ENCODE measurements at regions of chrX and their contacts with region 1.

Region 1: GRCh38 chrX:18674788-18675735 is 3.2 kb upstream of the RS1 start:
- DNase-seq: peak; percentile 87
- ATAC-seq: peak; percentile 93

Region 2: DNA sequence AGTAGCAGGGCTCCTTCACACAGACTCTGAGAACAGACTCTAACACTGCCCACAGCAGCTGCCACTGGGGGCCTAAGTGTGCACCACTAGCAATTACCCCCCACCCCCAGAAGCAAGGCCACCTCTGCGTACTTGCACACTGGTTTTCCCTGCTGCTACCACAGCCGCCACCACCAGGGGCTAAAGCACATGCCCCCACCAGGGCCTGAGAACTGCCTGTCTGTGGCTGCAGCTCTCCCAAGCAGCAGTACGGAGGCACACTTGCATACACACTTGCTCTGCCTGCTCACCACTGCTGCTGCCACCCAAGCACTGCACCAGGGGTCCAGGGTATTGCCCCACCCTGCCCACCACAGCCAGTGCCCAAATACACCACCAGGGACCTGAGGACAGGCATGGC is 380.2 kb before region 1 on chrX:
- intact Hi-C with region 1: no loop called
- DNase-seq: no peak
- ATAC-seq: no peak

Region 3: DNA sequence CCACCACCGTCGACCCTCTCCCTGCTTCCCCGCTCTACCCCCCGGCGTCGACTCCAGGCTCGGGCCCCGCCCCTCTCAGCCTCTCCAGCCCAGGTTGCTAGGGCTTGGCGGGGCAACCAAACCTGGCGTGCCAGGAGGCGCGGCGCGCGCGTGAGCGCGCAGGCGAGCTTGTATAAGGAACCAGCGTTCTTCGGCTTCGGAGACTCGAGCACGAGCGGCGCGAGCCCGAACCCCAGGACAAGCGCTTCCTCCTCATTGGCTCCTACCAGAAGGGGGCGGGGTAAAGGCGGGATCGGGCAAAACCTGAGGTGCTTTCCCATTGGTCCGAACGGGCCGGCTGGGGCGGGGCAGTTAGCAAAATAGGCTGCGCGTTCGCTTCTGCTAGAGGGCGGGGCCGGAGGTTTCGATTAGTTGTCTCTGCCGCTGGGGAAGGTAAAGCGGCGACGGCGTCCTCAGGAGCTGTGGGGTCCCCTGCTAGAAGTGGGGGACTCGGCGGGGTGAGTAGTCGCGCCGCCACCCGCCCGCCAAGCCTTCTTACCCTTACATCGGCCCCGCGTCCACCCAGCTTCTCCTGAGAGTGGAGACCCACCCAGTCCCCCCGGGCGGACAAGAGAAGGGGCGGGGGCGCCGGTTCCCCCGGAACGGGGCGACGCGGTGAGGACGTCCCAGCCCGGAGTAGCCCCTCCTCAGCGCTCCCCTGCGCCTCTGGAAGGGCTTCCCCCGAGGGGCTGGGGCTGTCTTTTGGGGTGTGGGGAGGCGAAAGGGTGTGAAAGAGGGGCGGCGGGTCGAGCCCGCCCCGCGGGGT is 249.7 kb before region 1 on chrX and contains the start of gene CDKL5:
- intact Hi-C with region 1: loop called (anchors 5 kb)
- DNase-seq: peak; percentile 97
- ATAC-seq: peak; percentile 98
- total RNA-seq, gene CDKL5: 8.1 TPM

Region 4: DNA sequence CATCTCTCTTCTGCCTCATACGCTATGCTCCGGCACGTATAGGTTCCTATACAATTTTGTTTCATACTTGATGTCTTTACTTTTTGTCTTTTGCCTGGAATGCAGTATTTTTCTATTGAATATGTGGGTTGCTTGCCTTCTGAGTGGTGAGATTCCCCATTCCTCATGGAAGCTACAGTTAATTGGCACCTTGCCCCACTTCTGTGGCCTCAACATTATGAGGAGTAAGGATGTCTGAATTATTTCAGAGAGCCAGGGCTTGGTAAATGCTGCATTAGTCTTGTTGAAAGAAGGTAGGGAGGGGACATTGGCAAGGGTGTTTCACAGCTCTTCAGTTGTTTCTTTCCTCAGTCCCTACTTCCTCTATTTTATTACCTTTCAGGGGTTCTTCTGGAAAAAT is 226.6 kb before region 1 on chrX:
- intact Hi-C with region 1: no loop called
- DNase-seq: no peak
- ATAC-seq: no peak

Region 5: DNA sequence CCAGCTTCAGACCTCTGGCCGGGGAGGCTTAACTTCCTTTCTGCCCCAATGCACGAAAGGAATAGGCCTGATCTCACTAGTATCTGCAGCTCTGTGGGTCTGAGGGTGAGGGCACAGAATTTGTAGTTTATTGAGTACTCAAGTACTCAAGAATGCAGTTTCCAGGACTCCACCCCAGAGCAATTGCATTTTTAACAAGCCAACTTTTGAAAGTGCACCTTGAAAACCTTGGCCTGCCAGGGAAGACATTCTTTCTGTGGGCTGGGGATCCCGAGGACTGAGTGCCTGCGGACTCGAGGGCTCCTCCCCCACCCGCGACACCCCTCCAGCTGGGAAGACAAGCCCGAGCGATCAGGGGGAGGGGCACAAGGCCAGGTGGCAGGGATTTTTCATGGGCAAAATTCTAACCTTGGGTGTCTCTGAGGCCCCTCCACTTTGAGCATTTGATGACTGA is 25.5 kb before region 1 on chrX:
- intact Hi-C with region 1: no loop called
- DNase-seq: no peak
- ATAC-seq: no peak

Region 6: DNA sequence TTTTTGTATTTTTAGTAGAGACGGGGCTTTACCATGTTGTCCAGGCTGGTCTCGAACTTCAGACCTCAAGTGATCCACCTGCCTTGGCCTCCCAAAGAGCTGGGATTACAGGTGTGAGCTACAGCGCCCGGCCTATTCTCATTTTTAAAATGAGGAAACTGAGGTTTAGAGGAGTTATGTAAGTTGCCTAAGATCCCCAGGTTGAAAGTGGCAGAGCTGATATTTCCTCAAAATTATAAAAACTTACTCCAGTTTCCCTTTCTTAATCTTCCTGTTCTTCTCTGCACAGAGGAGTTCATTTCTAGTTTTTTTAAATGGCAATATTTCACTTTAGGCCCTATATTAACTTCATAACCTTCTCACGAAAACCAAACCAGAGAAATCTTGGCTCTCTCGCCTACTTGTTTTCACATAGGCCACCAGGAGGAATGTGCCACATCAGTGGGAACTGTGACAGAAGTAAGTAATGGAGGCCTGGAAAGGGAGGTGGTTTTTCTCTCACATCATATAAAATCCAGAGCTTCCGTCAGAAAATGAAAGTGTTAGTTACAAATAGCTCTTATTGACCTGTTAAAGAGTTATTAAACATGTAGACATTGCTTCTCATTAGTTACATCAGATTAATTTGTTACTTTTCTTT is 12.9 kb after region 1 on chrX:
- intact Hi-C with region 1: no loop called
- DNase-seq: no peak
- ATAC-seq: no peak

Region 7: DNA sequence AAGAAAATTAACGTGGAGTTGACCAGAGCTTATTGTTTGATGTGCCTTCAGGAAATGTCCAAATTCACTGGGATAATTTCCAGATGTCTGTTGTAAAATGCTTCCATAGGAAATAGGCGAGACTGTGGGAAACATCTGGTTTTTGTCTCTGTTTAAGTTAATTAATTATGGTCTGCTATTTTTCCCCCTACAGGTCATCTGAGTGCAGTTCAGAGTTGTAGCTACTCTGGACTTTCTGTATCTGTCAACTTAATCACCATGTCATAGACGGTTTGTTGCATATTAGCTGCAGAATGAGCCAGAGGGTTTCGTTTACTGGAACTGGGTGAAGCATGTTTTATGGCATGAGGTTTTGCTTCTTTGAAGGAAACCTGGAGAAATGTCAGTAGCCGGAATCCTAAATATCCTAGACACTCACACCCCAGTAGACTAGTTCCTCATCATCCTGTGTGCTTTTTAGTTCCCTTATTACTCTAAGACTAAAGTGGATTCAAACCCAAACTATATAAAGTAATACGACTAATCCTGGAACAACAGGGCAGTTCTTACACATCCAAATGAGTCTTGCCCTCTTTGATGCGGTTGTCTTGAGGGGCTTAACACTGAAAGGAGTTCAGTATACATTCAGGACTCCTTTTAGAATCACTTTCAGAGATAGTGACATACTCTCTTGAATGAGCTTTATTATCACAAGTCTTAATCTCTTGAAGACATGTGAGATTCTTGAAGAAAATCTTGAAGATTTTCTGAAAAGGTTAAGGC is 94.9 kb after region 1 on chrX:
- intact Hi-C with region 1: loop called (anchors 5 kb)
- DNase-seq: no peak
- ATAC-seq: no peak

Region 8: DNA sequence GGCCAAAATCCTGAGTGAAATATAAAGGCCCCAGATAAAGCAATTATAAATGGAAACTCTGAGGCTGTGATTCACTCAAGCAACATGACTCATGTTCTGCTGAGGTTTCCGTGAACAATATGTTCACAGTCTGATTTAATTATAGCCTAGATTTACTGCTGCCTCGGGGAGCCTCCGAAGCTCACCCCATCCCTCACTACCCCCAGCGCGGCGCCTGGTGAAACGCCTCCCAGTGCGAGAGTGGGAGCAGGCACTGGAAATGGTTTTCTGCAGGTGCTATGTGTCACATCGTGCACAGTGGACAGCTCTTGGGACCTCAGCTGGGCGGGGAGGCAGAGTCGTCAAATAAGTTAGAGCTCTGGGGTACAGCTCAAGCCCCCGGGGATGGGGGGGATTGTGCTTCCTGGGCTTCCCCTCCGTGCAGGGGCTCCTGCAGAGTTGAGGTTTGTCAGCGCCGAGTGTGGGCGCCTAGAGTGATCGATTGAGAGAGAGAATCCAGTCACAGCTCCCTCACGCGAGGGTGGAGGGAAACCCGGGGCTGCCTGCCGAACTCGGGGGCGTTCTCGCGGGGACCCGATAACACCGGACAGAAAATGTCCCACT is 198.2 kb after region 1 on chrX:
- intact Hi-C with region 1: loop called (anchors 5 kb)
- DNase-seq: no peak
- ATAC-seq: peak; percentile 85

Region 9: GRCh38 chrX:18886344-18887161 is 211.5 kb after region 1 on chrX:
- intact Hi-C with region 1: loop called (anchors 5 kb)
- DNase-seq: peak; percentile 84
- ATAC-seq: peak; percentile 80

Measured in Right ventricle myocardium inferior (tissue), 1 donor.